PC-9 (cell line): ENCODE measurements at regions of chr6 and their contacts with region 1.

Region 1: DNA sequence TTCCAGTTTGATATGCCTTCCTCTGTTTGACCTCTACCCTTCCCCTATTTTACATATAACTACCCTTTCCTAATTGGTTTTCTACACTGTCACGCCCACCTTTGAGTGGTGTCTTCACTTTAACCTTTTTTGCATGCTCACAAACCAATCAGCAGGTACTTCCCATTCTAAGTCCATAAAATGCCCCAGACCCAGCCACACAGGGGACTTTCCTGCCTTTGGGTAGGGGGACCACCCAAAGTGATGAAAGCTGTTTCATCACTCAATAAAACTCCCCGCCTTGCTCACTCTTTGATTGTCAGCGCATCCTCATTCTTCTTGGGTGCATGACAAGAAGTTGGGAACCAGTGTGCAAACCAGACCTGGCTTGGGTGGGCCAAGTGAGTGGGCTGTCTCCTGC is 20.5 kb upstream of the SNRPC start:
- DNase-seq: no peak
- H3K4me3 ChIP-seq: no peak overlapping the region
- H3K27ac ChIP-seq: no peak overlapping the region
- H3K4me1 ChIP-seq: peaks cover 8% of the 10 kb centered on the region
- H3K27me3 ChIP-seq: no peaks in the 10 kb centered on the region
- CTCF ChIP-seq: no peak

Region 2: DNA sequence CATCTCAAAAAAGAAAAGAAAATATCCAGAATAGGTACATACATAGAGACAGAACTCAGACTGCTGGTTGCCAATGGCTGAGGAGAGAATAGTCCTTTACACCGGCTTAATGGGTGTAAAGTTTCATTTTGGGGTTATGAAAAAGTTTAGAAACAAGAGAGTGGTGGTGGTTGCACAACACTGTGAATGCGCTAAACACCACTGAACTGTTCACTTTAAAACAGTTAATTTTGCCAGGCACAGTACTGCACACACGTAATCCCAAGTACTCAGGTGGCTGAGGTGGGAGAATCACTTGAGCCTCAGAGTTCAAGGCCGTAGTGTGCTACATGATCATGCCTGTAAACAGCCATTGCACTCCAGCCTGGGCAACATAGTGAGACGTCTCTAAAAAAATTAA is 47.9 kb before region 1 on chr6:
- CTCF ChIA-PET with region 1: no interaction called
- POLR2A ChIA-PET with region 1: no interaction called
- intact Hi-C with region 1: no loop called
- DNase-seq: no peak
- H3K4me3 ChIP-seq: no peak overlapping the region
- H3K27ac ChIP-seq: no peak overlapping the region
- H3K4me1 ChIP-seq: peaks cover 3% of the 10 kb centered on the region; the same call in 1 of the 2 replicates
- H3K27me3 ChIP-seq: no peaks in the 10 kb centered on the region
- CTCF ChIP-seq: no peak

Region 3: GRCh38 chr6:34709386-34709785 is 27.4 kb before region 1 on chr6:
- CTCF ChIA-PET with region 1: no interaction called
- POLR2A ChIA-PET with region 1: interaction called, 16 read pairs
- intact Hi-C with region 1: no loop called
- DNase-seq: no peak
- H3K4me3 ChIP-seq: no peak overlapping the region
- H3K27ac ChIP-seq: no peak overlapping the region
- H3K4me1 ChIP-seq: peaks cover 5% of the 10 kb centered on the region; the same call in 1 of the 2 replicates
- H3K27me3 ChIP-seq: no peaks in the 10 kb centered on the region
- CTCF ChIP-seq: no peak